ENCODE measurements at regions of chr19 and their contacts with region 1.

Region 1: DNA sequence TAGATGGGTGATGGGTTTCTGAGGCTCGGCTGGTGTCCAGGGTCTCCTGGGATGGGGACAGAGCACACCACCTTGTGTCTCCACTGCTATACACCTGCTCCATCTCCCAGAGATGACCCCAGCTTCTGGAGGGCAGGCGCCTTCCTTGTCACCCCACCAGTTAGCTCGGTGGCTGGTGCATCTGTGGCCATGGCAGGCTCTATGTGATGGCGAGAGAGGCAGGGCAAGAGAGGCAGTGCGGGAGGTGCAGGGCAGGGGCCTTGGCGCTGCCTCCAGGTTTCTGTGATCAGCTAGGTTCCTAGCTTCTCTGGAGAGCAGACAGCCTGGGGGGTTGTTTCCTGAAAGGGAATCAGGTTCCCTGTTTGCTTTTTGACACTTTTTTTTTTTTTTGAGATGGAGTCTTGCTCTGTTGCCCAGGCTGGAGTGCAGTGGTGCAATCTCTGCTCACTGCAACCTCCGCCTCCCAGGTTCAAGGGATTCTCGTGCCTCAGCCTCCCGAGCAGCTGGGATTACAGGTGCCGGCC is 69.0 kb upstream of the ZNF536 start:
- DNase-seq: no peak
- H3K4me3 Mint-ChIP-seq: no peak overlapping the region
- H3K27ac Mint-ChIP-seq: no peak overlapping the region
- H3K4me1 Mint-ChIP-seq: no peaks in the 10 kb centered on the region
- H3K27me3 Mint-ChIP-seq: no peaks in the 10 kb centered on the region
- CTCF ChIP-seq: no peak

Region 2: DNA sequence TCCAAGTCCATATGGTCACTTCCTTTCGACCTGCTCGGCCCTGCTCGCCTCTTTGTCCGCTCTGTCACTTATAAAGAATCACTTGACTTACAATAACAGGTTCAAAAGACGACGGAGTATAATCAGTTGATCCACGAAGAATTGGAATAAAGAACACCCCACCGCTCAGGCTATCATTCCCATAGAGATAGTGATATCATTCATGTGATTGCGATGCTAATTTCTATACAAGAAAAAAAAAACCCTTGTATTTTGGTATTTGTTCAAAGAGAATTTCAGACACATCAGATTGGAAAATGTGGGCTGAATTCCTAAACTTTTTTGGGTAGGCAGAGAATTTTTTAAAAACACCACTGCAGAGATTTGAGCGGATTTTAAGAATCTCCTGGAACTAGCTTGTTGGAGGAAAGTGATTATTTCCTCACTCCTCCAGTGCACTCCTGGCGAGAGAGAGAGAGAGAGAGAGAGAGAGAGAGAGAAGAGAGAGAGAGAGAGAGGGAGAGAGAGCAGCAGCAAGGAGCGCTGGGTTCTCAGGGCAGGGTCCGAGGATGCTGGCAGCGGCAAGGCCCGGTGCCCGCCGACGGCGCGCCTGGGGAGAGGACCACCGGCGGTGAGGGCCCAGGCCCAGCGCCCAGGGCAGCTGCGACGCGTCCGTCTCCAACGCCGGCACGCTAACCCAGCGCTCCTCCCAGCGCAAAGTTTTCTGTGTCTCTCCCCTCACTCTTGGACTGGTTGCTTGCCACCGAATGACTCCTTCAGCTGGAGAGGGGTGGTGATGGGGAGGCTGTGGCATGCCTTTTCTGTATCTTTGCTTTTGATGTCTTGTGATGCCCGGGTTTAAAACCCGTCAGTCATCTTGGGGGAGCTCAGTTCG is 80.0 kb before region 1 on chr19:
- CTCF ChIA-PET with region 1: interaction called, 10 read pairs
- intact Hi-C with region 1: no loop called
- DNase-seq: no peak
- H3K4me3 Mint-ChIP-seq: no peak overlapping the region
- H3K27ac Mint-ChIP-seq: no peak overlapping the region
- H3K4me1 Mint-ChIP-seq: peaks cover 7% of the 10 kb centered on the region
- H3K27me3 Mint-ChIP-seq: peaks cover 33% of the 10 kb centered on the region
- CTCF ChIP-seq: no peak

Measured in Calu3 (cell line).